Activated CD8-positive, alpha-beta memory T cell treated with anti-CD3 and anti-CD28 coated beads, Interleukin-2, amount 10 ng/mL, durations not matched to agents 7 days and 5 days (primary cell): ENCODE measurements at regions of chr1 and their contacts with region 1.

Region 1: GRCh38 chr1:26787706-26788514 is at the start of gene PIGV:
- DNase-seq: peak; percentile 93
- ATAC-seq: peak; percentile 74
- H3K4me3 Mint-ChIP-seq: peak within 1 kb of the TSS; percentile 81
- H3K27ac Mint-ChIP-seq: peak within 1 kb of the TSS; percentile 100
- H3K4me1 Mint-ChIP-seq: peaks cover 70% of the 10 kb centered on the region
- H3K27me3 Mint-ChIP-seq: peaks cover 2% of the 10 kb centered on the region
- total RNA-seq, gene PIGV: 8.6 to 9.7 TPM

Region 2: DNA sequence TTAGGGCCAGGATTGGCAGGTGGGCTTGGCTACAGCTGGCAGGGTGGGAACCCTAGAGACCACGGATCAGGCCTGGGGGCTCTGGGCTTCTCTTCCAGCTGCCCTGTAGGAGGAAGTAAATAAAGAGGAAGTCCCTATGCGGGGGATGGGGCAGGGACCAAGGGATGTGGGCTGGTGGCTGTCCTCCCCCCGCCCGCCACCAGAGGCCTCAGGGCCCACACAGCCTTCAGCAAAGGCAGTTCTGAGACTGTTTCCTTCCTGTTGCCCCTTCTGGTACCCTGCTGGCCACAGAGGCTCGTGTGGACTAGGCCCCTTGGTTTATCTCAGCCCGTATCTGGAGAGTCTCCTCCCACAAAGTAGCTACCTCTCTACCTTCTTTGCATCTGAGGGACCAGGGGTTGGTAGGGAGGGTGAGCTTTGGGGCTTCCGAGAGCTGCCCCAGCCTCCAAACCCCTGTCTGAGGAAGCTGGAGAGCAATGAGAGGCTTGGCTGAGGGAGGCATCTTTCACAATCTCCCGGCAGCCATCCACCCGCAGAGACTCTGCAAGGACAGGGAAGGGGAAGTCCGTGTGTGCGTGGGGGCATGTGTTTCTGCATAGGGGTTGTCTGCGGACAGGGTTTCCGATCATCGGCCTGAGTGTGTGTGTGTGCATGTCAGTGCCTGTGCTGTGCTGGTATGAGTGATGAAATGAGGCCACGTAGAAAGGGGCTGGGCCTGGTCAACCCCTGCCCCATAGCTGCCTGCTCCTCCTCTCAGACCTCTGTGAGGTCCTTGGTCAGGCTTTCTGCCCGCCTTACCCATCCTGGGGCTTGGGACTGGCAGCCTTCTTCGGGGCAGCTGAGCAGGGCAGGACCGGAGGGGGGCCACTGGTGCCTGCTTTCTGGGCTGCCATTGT is 245.8 kb before region 1 on chr1:
- CTCF ChIA-PET with region 1: interaction called, 13 read pairs
- DNase-seq: peak; percentile 95
- ATAC-seq: peak; percentile 73
- H3K4me3 Mint-ChIP-seq: peak overlapping the region; percentile 73
- H3K27ac Mint-ChIP-seq: peak overlapping the region; percentile 97
- H3K4me1 Mint-ChIP-seq: peaks cover 85% of the 10 kb centered on the region
- H3K27me3 Mint-ChIP-seq: no peaks in the 10 kb centered on the region

Region 3: DNA sequence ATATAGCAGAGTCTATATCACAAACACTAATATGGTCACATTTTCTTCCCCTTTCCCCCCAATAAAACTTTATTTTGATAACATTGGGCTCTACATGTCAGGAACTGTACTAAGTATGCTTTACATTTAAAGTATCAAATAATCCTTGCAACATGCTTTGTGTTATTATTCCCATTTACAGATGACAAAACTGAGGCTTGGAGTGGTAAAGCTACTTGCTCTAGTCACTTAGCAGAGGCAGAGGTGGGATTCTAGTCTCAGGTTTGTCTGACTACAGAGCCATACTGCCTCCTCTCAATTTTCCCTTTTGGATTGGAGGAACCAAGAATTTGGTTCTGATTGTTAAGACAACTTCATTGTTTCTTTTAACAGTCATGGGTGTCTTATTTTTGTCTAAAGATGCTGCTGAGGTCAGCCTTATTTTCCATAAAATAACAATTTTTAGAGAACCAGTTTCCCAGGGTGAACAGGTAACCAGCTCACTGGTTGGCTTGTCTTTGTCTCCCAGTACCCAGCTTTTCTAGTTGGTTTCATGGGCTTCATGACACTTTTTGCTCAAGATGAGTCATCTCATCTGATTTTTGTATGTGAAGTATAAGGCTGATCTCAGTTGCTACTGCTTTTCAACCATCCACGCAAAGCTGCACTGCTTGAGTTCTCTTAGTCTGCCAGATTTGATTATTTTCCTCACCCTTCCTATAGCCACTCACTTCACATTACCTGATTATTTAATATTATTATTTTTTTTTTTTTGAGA is 173.1 kb before region 1 on chr1:
- CTCF ChIA-PET with region 1: interaction called, 33 read pairs
- DNase-seq: no peak
- ATAC-seq: no peak
- H3K4me3 Mint-ChIP-seq: no peak overlapping the region
- H3K27ac Mint-ChIP-seq: no peak overlapping the region
- H3K4me1 Mint-ChIP-seq: peaks cover 10% of the 10 kb centered on the region
- H3K27me3 Mint-ChIP-seq: peaks cover 10% of the 10 kb centered on the region

Region 4: DNA sequence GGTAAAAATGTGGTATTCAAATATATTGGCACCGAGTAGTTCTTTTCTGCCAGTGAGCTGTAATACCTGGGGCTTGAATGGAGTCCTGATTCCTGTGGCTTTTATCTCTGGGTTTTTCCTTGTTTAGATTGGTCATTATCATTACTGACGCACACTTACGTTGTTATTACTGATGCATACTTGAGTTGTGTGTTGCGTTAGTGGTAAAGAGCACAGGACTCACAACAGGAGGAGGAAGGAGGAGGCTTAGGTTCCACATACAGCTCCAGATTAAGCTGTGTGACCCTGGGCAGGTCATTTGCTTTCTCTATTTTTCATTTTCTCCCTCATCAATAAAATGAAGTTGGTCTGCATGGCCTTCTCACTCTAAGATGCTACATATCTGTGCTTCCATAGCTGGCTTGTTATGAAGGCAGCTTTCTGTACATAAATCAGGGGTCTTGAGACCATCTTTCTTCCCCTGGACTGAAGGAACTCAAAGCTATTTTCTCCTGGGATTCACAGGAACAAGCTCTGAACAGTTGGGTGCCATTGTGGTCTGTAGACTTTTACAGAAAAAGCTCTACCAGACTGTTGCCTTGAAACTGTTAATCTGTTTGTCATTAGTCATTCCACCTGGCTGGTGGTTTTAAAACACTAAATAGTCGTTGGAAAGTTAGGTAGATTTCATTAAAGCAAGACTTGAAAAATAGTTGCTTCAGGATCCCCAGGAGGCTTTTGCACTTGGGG is 86.5 kb before region 1 on chr1:
- CTCF ChIA-PET with region 1: interaction called, 45 read pairs
- DNase-seq: no peak
- ATAC-seq: no peak
- H3K4me3 Mint-ChIP-seq: no peak overlapping the region
- H3K27ac Mint-ChIP-seq: no peak overlapping the region
- H3K4me1 Mint-ChIP-seq: peaks cover 15% of the 10 kb centered on the region
- H3K27me3 Mint-ChIP-seq: no peaks in the 10 kb centered on the region

Region 5: GRCh38 chr1:26811057-26811456 is 23.1 kb after region 1 on chr1:
- CTCF ChIA-PET with region 1: interaction called, 42 read pairs
- DNase-seq: no peak
- ATAC-seq: peak; percentile 23
- H3K4me3 Mint-ChIP-seq: no peak overlapping the region
- H3K27ac Mint-ChIP-seq: peak overlapping the region; percentile 43
- H3K4me1 Mint-ChIP-seq: peaks cover 28% of the 10 kb centered on the region
- H3K27me3 Mint-ChIP-seq: no peaks in the 10 kb centered on the region

Region 6: GRCh38 chr1:26833432-26834405 is 45.8 kb after region 1 on chr1:
- CTCF ChIA-PET with region 1: interaction called, 40 read pairs
- DNase-seq: peak; percentile 98
- ATAC-seq: peak; percentile 97
- H3K4me3 Mint-ChIP-seq: peak overlapping the region; percentile 56
- H3K27ac Mint-ChIP-seq: peak overlapping the region; percentile 96
- H3K4me1 Mint-ChIP-seq: peaks cover 75% of the 10 kb centered on the region
- H3K27me3 Mint-ChIP-seq: no peaks in the 10 kb centered on the region